CD8-positive, alpha-beta T cell (primary cell): ENCODE measurements at regions of chrX and their contacts with region 1.

Region 1: GRCh38 chrX:53471346-53471745 is 37.2 kb upstream of the HSD17B10 start:
- DNase-seq: no peak
- ATAC-seq: no peak
- H3K4me3 ChIP-seq: no peak overlapping the region
- H3K4me3 Mint-ChIP-seq: no peak overlapping the region
- H3K27ac ChIP-seq: no peak overlapping the region
- H3K27ac Mint-ChIP-seq: no peak overlapping the region
- H3K4me1 ChIP-seq: no peaks in the 10 kb centered on the region
- H3K4me1 Mint-ChIP-seq: no peaks in the 10 kb centered on the region
- H3K27me3 ChIP-seq: no peaks in the 10 kb centered on the region
- H3K27me3 Mint-ChIP-seq: peaks cover 17% of the 10 kb centered on the region
- CTCF ChIP-seq: no peak

Region 2: GRCh38 chrX:53481816-53482465 is 10.6 kb after region 1 on chrX:
- CTCF ChIA-PET with region 1: interaction called, 11 read pairs
- POLR2A ChIA-PET with region 1: no interaction called
- intact Hi-C with region 1: no loop called
- DNase-seq: peak; percentile 6 to 66 (median 42)
- ATAC-seq: peak; percentile 52
- H3K4me3 ChIP-seq: no peak overlapping the region
- H3K4me3 Mint-ChIP-seq: no peak overlapping the region
- H3K27ac ChIP-seq: no peak overlapping the region
- H3K27ac Mint-ChIP-seq: no peak overlapping the region
- H3K4me1 ChIP-seq: peaks cover 3% of the 10 kb centered on the region
- H3K4me1 Mint-ChIP-seq: no peaks in the 10 kb centered on the region
- H3K27me3 ChIP-seq: no peaks in the 10 kb centered on the region
- H3K27me3 Mint-ChIP-seq: peaks cover 3% of the 10 kb centered on the region
- CTCF ChIP-seq: peak; percentile 54